CD4-positive, alpha-beta T cell (primary cell): ENCODE measurements at regions of chr1 and their contacts with region 1.

Region 1: GRCh38 chr1:226687426-226687825 is 51.7 kb downstream of the ITPKB start:
- DNase-seq: peak in 12 of 14 experiments; percentile 32 to 81 (median 54)
- ATAC-seq: peak; percentile 27
- H3K4me3 ChIP-seq: no peak overlapping the region
- H3K4me3 Mint-ChIP-seq: peak overlapping the region; percentile 72
- H3K27ac ChIP-seq: peak overlapping the region; percentile 47 to 70
- H3K27ac Mint-ChIP-seq: peak overlapping the region; percentile 98
- H3K4me1 ChIP-seq: peaks cover 94% of the 10 kb centered on the region
- H3K4me1 Mint-ChIP-seq: peaks cover 100% of the 10 kb centered on the region
- H3K27me3 ChIP-seq: no peaks in the 10 kb centered on the region
- H3K27me3 Mint-ChIP-seq: no peaks in the 10 kb centered on the region
- CTCF ChIP-seq: peak; percentile 45

Region 2: GRCh38 chr1:226626577-226626956 is 60.9 kb before region 1 on chr1:
- CTCF ChIA-PET with region 1: interaction called, 18 read pairs
- POLR2A ChIA-PET with region 1: interaction called, 3 read pairs
- intact Hi-C with region 1: loop called in 1 of 2 experiments (anchors 2 kb)
- DNase-seq: peak; percentile 65 to 88 (median 73)
- ATAC-seq: peak; percentile 97
- H3K4me3 ChIP-seq: peak overlapping the region; percentile 43
- H3K4me3 Mint-ChIP-seq: no peak overlapping the region
- H3K27ac ChIP-seq: no peak overlapping the region
- H3K27ac Mint-ChIP-seq: peak overlapping the region; percentile 46
- H3K4me1 ChIP-seq: peaks cover 18% of the 10 kb centered on the region
- H3K4me1 Mint-ChIP-seq: peaks cover 22% of the 10 kb centered on the region
- H3K27me3 ChIP-seq: no peaks in the 10 kb centered on the region
- H3K27me3 Mint-ChIP-seq: no peaks in the 10 kb centered on the region
- CTCF ChIP-seq: peak; percentile 99

Region 3: GRCh38 chr1:226634166-226634588 is 53.2 kb before region 1 on chr1:
- CTCF ChIA-PET with region 1: interaction called, 19 read pairs
- POLR2A ChIA-PET with region 1: interaction called, 9 read pairs
- intact Hi-C with region 1: loop called (anchors 1 to 2 kb)
- DNase-seq: peak; percentile 72 to 90 (median 78)
- ATAC-seq: peak; percentile 71
- H3K4me3 ChIP-seq: no peak overlapping the region
- H3K4me3 Mint-ChIP-seq: peak overlapping the region; percentile 52
- H3K27ac ChIP-seq: peak overlapping the region; percentile 22 to 54
- H3K27ac Mint-ChIP-seq: peak overlapping the region; percentile 87
- H3K4me1 ChIP-seq: peaks cover 55% of the 10 kb centered on the region
- H3K4me1 Mint-ChIP-seq: peaks cover 61% of the 10 kb centered on the region
- H3K27me3 ChIP-seq: no peaks in the 10 kb centered on the region
- H3K27me3 Mint-ChIP-seq: no peaks in the 10 kb centered on the region
- CTCF ChIP-seq: peak; percentile 95

Region 4: GRCh38 chr1:226649780-226650179 is 37.6 kb before region 1 on chr1:
- CTCF ChIA-PET with region 1: interaction called, 11 read pairs
- POLR2A ChIA-PET with region 1: interaction called, 6 read pairs
- intact Hi-C with region 1: loop called (anchors 1 to 5 kb)
- DNase-seq: peak in 9 of 14 experiments; percentile 34 to 72 (median 53)
- ATAC-seq: peak; percentile 14
- H3K4me3 ChIP-seq: no peak overlapping the region
- H3K4me3 Mint-ChIP-seq: peak overlapping the region; percentile 12
- H3K27ac ChIP-seq: no peak overlapping the region
- H3K27ac Mint-ChIP-seq: no peak overlapping the region
- H3K4me1 ChIP-seq: peaks cover 45% of the 10 kb centered on the region
- H3K4me1 Mint-ChIP-seq: peaks cover 26% of the 10 kb centered on the region
- H3K27me3 ChIP-seq: no peaks in the 10 kb centered on the region
- H3K27me3 Mint-ChIP-seq: no peaks in the 10 kb centered on the region
- CTCF ChIP-seq: peak; percentile 42

Region 5: DNA sequence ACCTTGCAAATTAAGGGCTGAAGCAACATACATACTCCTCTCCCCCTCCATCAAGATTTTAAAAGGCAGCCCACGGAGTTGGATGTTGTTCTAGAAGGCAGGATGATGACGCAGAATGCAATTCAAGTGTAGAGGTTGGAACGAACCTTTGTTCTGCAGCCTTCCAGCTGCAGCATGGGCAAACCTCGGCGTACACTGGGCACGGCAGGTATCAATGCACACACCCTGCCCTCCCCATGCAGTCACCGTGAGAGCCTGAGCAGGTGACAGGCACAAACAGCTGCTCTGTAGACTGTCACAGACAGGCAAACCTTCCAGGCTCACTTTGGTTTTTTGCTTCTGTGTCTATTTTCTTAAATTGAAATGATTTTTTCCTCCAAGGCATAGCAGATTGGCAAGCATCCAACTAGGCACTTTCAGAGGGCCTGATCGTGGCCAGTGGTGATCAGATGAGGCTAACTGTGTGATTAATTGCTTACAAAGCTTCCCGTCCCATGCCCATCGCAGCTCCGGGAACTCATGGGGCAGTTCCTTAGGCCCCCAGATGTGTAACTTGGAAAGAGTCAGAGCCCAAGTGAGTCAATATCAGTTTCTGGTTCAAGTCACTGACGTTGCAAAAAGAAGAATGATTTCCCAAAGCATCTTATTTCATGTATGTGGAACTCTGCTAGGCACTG is 30.7 kb before region 1 on chr1:
- CTCF ChIA-PET with region 1: interaction called, 17 read pairs
- POLR2A ChIA-PET with region 1: interaction called, 12 read pairs
- intact Hi-C with region 1: loop called (anchors 1 to 5 kb)
- DNase-seq: peak in 13 of 14 experiments; percentile 33 to 90 (median 61)
- ATAC-seq: peak; percentile 77
- H3K4me3 ChIP-seq: no peak overlapping the region
- H3K4me3 Mint-ChIP-seq: peak overlapping the region; percentile 79
- H3K27ac ChIP-seq: peak overlapping the region in 1 of 2 donors; percentile 47
- H3K27ac Mint-ChIP-seq: no peak overlapping the region
- H3K4me1 ChIP-seq: no peaks in the 10 kb centered on the region
- H3K4me1 Mint-ChIP-seq: no peaks in the 10 kb centered on the region
- H3K27me3 ChIP-seq: no peaks in the 10 kb centered on the region
- H3K27me3 Mint-ChIP-seq: no peaks in the 10 kb centered on the region
- CTCF ChIP-seq: no peak

Region 6: DNA sequence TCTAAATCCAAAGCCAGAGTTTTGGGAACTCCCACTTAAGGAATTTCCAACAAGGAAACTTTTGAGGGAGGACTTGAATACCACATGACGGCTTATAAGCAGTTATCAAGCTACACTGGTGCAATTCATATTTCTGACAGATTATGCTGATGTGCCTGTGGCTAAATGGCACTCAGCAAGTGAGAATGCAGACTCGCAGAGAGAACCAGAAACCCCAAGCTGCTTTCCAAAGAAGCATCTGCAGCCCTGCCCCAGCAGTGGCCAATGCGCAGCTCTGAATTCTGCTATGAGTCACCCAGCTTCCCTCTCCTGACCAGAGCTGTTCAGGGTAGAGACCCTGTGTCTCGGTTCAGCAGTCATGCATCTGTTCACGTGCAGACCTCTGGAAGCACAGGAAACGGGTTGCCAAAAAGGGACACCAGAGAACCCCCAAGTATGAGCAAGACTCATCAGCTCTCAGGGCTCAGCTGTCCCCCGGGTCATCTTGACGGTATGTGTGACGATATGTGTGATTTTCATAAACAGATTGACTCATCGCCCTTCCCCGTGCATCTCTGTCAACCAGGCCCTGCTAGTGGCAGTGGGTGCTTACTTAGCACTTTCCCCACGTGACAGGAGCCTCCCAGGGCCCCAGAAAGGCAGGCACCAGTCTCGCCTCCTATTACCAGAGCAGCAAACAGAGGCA is 24.6 kb before region 1 on chr1:
- CTCF ChIA-PET with region 1: interaction called, 17 read pairs
- POLR2A ChIA-PET with region 1: interaction called, 12 read pairs
- intact Hi-C with region 1: loop called in 1 of 2 experiments (anchors 2 kb)
- DNase-seq: peak; percentile 67 to 96 (median 81)
- ATAC-seq: peak; percentile 85
- H3K4me3 ChIP-seq: no peak overlapping the region
- H3K4me3 Mint-ChIP-seq: peak overlapping the region; percentile 71
- H3K27ac ChIP-seq: peak overlapping the region in 1 of 2 donors; percentile 47
- H3K27ac Mint-ChIP-seq: no peak overlapping the region
- H3K4me1 ChIP-seq: no peaks in the 10 kb centered on the region
- H3K4me1 Mint-ChIP-seq: no peaks in the 10 kb centered on the region
- H3K27me3 ChIP-seq: no peaks in the 10 kb centered on the region
- H3K27me3 Mint-ChIP-seq: no peaks in the 10 kb centered on the region
- CTCF ChIP-seq: no peak